ENCODE measurements at regions of chr1 and their contacts with region 1.

Region 1: DNA sequence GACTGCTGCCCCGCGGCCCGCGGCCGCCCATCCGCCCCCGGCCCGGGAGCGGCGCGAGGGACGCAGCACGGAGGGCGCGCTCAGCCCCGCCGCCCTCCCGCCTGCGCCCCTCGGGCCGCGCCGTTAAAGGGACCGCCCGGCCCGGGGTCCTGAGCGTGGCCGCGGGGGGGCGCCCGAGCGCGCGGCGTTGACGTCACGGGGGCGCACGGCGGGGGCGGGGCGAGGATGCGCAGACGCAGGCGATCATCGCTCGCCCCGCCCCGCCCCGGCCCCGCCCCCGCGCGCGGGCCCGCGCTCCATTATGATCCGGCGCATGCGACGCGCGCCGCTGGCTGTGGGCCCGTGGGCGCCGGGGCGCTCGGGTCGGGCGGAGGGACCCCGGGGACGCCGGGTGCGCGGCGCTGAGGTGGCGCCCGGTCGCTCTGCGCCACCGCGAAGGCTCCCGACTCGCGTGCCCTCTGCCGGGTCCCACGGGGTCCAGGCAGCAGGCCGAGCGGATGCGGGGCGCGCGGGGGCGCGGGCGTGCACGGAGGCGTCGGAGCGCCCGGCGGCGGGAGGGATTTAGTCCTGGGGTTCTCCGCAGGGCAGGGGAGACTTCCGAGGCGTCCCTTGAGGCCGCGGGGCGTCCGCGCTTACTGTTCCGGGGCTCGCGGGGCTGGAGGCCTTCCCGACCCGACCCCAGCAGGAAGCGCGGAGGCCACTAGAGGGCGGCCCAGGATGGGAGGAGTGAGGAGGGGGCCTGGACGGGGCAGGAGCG is at the start of gene DVL1:
- DNase-seq: peak; percentile 67 to 86 (median 71)
- ATAC-seq: peak in 3 of 4 donors; percentile 11 to 52 (median 37)
- H3K4me3 ChIP-seq: peak within 1 kb of the TSS; percentile 56 to 98 (median 82)
- H3K27ac ChIP-seq: peak within 1 kb of the TSS; percentile 79 to 94 (median 87)
- H3K4me1 ChIP-seq: peaks cover 3 to 73% (median 62%) of the 10 kb centered on the region in 12 donors
- H3K27me3 ChIP-seq: peaks cover 0 to 21% (median 11%) of the 10 kb centered on the region in 9 donors
- CTCF ChIP-seq: peak; percentile 23 to 65 (median 44)
- POLR2A ChIP-seq: peak in 1 of 2 donors; percentile 73
- total RNA-seq, gene DVL1: 75.3 to 177 (median 85.3) TPM

Region 2: GRCh38 chr1:1106510-1107221 is 242.8 kb before region 1 on chr1:
- intact Hi-C with region 1: no loop called
- DNase-seq: peak in 3 of 5 donors; percentile 7 to 44 (median 13)
- ATAC-seq: peak in 1 of 4 donors; percentile 20
- H3K4me3 ChIP-seq: no peak overlapping the region
- H3K27ac ChIP-seq: no peak overlapping the region
- H3K4me1 ChIP-seq: no peaks in the 10 kb centered on the region
- H3K27me3 ChIP-seq: no peaks in the 10 kb centered on the region
- CTCF ChIP-seq: no peak
- POLR2A ChIP-seq: no peak

Region 3: GRCh38 chr1:1291548-1292441 is 57.6 kb before region 1 on chr1:
- intact Hi-C with region 1: no loop called
- DNase-seq: peak in 4 of 5 donors; percentile 65 to 81 (median 73)
- ATAC-seq: peak; percentile 65 to 82 (median 66)
- H3K4me3 ChIP-seq: no peak overlapping the region
- H3K27ac ChIP-seq: no peak overlapping the region
- H3K4me1 ChIP-seq: peaks cover 0 to 15% (median 7%) of the 10 kb centered on the region in 12 donors
- H3K27me3 ChIP-seq: peaks cover 0 to 4% (median 0%) of the 10 kb centered on the region in 9 donors
- CTCF ChIP-seq: peak; percentile 47 to 69 (median 62)
- POLR2A ChIP-seq: no peak

Region 4: GRCh38 chr1:1307908-1308755 is 41.3 kb before region 1 on chr1 and contains the starts of genes ACAP3 and PUSL1:
- intact Hi-C with region 1: loop called in 1 of 10 experiments (anchors 2 kb)
- DNase-seq: peak; percentile 89 to 94 (median 93)
- ATAC-seq: peak; percentile 38 to 78 (median 71)
- H3K4me3 ChIP-seq: peak within 1 kb of the TSS; percentile 71 to 95 (median 90)
- H3K27ac ChIP-seq: peak within 1 kb of the TSS; percentile 89 to 100 (median 96)
- H3K4me1 ChIP-seq: peaks cover 18 to 58% (median 45%) of the 10 kb centered on the region in 12 donors
- H3K27me3 ChIP-seq: no peaks in the 10 kb centered on the region
- CTCF ChIP-seq: peak in 3 of 12 donors; percentile 3 to 19 (median 11)
- POLR2A ChIP-seq: no peak
- total RNA-seq, gene ACAP3: 28.7 to 56.3 (median 34.1) TPM
- total RNA-seq, gene PUSL1: 6.8 to 17.7 (median 9.7) TPM

Region 5: DNA sequence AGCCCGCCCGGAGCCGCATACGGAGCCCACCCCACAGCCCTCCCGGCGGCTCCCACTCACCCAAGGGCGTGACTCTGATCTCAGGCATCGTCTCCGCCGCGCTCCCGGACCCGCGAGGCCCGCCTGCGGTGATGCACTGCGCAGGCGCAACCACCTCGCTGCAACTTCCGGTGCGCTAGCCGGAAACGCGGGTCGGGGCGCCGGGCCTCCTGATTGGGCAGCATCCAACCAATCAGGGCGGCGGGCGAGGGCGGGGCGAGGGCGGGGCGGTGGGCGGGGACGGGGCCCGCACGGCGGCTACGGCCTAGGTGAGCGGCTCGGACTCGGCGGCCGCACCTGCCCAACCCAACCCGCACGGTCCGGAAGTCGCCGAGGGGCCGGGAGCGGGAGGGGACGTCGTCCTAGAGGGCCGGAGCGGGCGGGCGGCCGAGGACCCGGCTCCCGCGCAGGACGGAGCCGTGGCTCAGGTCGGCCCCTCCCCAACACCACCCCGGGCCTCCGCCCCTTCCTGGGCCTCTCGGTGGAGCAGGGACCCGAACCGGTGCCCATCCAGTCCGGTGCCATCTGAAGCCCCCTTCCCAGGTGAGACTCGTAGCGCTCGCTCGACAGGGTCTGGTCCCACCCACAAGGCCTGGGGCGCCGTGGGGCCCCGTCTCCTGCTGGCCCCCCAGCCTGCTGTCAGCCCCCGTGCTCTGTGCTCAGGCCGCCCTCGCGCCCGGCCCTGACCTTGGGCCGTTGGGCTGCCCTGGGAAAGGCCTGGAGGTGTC is 24.7 kb before region 1 on chr1 and contains the starts of genes CPTP and INTS11:
- intact Hi-C with region 1: loop called in 1 of 10 experiments (anchors 2 kb)
- DNase-seq: peak; percentile 94 to 99 (median 96)
- ATAC-seq: peak; percentile 55 to 81 (median 80)
- H3K4me3 ChIP-seq: peak within 1 kb of the TSS; percentile 73 to 100 (median 95)
- H3K27ac ChIP-seq: peak within 1 kb of the TSS; percentile 88 to 98 (median 96)
- H3K4me1 ChIP-seq: peaks cover 7 to 80% (median 43%) of the 10 kb centered on the region in 12 donors
- H3K27me3 ChIP-seq: no peaks in the 10 kb centered on the region
- CTCF ChIP-seq: no peak
- POLR2A ChIP-seq: peak; percentile 52 to 81
- total RNA-seq, gene CPTP: 50.7 to 220 (median 72.4) TPM
- total RNA-seq, gene INTS11: 46.8 to 91.3 (median 67.6) TPM

Region 6: GRCh38 chr1:1374929-1375662 is 25.7 kb after region 1 on chr1 and contains the start of gene AURKAIP1:
- intact Hi-C with region 1: no loop called
- DNase-seq: peak; percentile 98 to 99 (median 99)
- ATAC-seq: peak; percentile 95 to 98 (median 96)
- H3K4me3 ChIP-seq: peak within 1 kb of the TSS; percentile 78 to 100 (median 94)
- H3K27ac ChIP-seq: peak within 1 kb of the TSS; percentile 82 to 99 (median 96)
- H3K4me1 ChIP-seq: peaks cover 10 to 42% (median 33%) of the 10 kb centered on the region in 12 donors
- H3K27me3 ChIP-seq: no peaks in the 10 kb centered on the region
- CTCF ChIP-seq: peak in 6 of 12 donors; percentile 17 to 62 (median 34)
- POLR2A ChIP-seq: peak; percentile 12 to 76
- total RNA-seq, gene AURKAIP1: 157 to 273 (median 188) TPM

Region 7: GRCh38 chr1:1567891-1568291 is 218.5 kb after region 1 on chr1:
- intact Hi-C with region 1: no loop called
- DNase-seq: no peak
- ATAC-seq: no peak
- H3K4me3 ChIP-seq: no peak overlapping the region
- H3K27ac ChIP-seq: no peak overlapping the region
- H3K4me1 ChIP-seq: peaks cover 0 to 78% (median 39%) of the 10 kb centered on the region in 12 donors
- H3K27me3 ChIP-seq: no peaks in the 10 kb centered on the region
- CTCF ChIP-seq: no peak
- POLR2A ChIP-seq: no peak

Measured in heart left ventricle (tissue), 16 donors.